ENCODE measurements at regions of chr4 and their contacts with region 1.

Region 1: DNA sequence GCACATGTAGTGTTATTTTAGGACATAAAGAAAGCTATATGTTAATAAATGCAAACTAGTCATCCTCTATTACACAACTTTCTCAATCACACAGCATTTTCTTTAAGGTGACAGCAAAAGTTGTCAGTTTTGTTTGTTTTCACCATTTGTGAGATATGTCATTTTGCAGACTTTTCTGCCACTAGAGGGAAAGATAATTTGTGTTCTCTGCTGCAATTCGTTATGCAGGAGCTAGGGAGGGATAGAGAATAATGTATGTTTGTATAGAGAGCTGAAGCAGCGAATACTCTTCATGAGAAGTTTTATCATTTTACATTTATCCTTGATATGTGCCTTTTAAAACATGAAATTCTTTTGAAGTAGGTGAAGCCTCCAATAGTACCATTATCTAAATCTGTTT is 670.6 kb upstream of the ATOH1 start:
- DNase-seq: peak; percentile 3 to 27 (median 25)
- H3K4me3 ChIP-seq: no peak overlapping the region
- H3K27ac ChIP-seq: no peak overlapping the region
- H3K4me1 ChIP-seq: no peaks in the 10 kb centered on the region
- H3K27me3 ChIP-seq: no peaks in the 10 kb centered on the region

Region 2: DNA sequence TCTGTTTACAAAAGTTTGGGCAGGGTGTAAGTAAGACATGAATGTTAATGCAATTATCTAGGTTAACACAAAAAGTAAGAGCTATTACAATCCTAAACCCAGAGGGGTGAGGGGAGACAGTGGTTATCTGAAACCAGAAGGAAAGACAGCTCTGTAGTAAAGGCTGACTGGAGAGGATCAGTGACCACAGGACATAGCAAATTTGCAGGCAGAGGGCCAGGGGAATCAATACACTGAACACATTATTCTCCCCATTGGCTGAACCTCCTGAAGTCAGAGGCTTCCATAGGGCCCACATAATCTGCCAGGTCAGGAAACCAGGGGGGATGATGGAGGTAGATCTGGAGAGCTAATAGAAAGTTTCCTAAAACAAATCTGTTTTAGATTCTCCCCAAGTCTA is 18.9 kb before region 1 on chr4:
- CTCF ChIA-PET with region 1: interaction called, 11 read pairs
- POLR2A ChIA-PET with region 1: no interaction called
- DNase-seq: no peak
- H3K4me3 ChIP-seq: no peak overlapping the region
- H3K27ac ChIP-seq: no peak overlapping the region
- H3K4me1 ChIP-seq: no peaks in the 10 kb centered on the region
- H3K27me3 ChIP-seq: no peaks in the 10 kb centered on the region

Measured in common myeloid progenitor, CD34-positive (primary cell).